GM12878 (cell line): ENCODE measurements at regions of chr5 and their contacts with region 1.

Region 1: DNA sequence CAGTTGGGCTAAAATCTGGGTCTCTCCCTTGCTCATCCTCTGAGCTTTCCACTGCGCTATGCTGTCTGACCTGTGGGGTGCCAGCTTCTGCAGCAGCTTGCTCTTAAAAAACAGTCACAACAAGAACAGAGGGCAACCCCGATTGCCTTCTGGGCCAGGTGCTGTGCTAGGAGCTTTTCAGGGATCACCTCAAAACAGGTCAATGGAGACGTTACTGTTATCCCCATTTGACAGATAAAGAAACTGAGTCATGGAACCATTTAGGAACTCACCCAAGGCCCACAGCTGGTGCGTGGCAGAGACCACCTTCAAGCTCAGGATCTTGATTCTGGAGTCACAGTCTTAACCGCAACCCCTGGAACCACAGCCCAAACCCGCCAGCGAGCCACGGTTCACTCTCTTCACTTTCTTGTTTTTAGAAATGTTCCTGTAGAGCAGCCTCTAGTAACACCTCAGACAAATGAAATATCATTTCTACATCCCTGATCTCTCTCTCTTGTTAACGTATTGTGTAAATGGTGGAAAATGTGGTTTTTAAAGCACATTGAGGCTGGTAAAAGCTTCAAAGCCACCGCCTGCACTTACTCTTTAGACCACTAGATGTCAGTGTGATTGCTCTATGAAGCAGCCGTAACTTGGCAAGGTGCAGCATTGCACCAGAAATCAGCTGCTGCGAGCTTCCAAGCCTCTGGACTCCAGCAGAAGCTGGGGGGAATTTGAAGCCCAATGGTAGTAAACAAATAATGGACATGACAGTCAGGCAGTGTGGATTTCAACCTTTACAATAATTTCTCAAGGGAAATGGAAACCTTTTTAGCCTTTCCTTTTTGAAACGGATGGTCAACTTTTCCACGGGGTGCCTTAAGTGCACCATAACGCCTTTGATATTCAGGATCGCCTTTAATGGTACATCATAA is 1.7 kb downstream of the FYB1 start:
- DNase-seq: peak; percentile 36
- ATAC-seq: peak; percentile 89
- H3K4me3 ChIP-seq: no peak overlapping the region
- H3K27ac ChIP-seq: no peak overlapping the region
- H3K4me1 ChIP-seq: no peaks in the 10 kb centered on the region
- H3K27me3 ChIP-seq: no peaks in the 10 kb centered on the region
- CTCF ChIP-seq: peak; percentile 92 to 96 (median 95)
- EP300 ChIP-seq: no peak
- POLR2A ChIP-seq: no peak
- RAD21 ChIP-seq: peak; percentile 84

Region 2: DNA sequence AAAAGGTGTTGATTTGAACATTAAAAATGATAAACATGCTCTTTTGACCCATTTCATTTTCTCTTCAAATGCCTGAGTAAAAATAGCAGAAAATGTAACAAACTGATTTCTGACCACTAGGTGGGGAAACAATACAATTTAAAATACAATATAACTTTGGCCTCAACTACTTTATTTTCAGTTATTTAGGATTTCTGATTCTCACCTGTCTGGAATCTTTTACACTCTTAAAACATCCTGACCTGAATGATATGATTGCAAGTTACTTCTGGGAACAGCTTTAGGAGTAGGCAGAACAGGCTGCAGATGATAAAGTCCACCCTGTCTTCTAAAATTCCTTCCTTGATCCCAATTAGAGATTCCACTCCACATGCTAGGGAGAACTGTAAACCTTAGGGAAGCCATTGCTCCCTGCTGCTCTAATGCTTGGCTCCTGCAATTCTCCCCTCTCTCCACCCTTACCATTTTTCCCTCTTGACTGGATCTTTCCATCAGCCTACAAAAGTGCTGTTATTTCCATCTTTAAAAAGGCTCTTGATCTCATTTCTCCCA is 68.6 kb before region 1 on chr5:
- CTCF ChIA-PET with region 1: interaction called, 10 read pairs
- POLR2A ChIA-PET with region 1: no interaction called
- RAD21 ChIA-PET with region 1: interaction called, 11 read pairs
- SMC1A ChIA-PET with region 1: interaction called, 8 read pairs
- in situ Hi-C with region 1: no loop called
- intact Hi-C with region 1: no loop called
- DNase-seq: no peak
- ATAC-seq: peak; percentile 49
- H3K4me3 ChIP-seq: no peak overlapping the region
- H3K27ac ChIP-seq: no peak overlapping the region
- H3K4me1 ChIP-seq: no peaks in the 10 kb centered on the region
- H3K27me3 ChIP-seq: no peaks in the 10 kb centered on the region
- CTCF ChIP-seq: peak in 2 of 3 experiments; percentile 22 to 26; a peak in 2 of 6 replicates
- EP300 ChIP-seq: no peak
- POLR2A ChIP-seq: no peak
- RAD21 ChIP-seq: 0 out of 2 replicates have a peak, but pooled peaks have one; percentile 12

Region 3: GRCh38 chr5:39256477-39257235 is 39.0 kb after region 1 on chr5:
- CTCF ChIA-PET with region 1: interaction called, 10 read pairs
- POLR2A ChIA-PET with region 1: no interaction called
- RAD21 ChIA-PET with region 1: interaction called, 9 read pairs
- SMC1A ChIA-PET with region 1: interaction called, 27 read pairs
- in situ Hi-C with region 1: no loop called
- intact Hi-C with region 1: no loop called
- DNase-seq: peak; percentile 56
- ATAC-seq: peak; percentile 93
- H3K4me3 ChIP-seq: no peak overlapping the region
- H3K27ac ChIP-seq: peak overlapping the region; percentile 48; the same call in 1 of the 2 replicates
- H3K4me1 ChIP-seq: no peaks in the 10 kb centered on the region
- H3K27me3 ChIP-seq: no peaks in the 10 kb centered on the region
- CTCF ChIP-seq: no peak
- EP300 ChIP-seq: no peak
- POLR2A ChIP-seq: no peak
- RAD21 ChIP-seq: no peak

Region 4: DNA sequence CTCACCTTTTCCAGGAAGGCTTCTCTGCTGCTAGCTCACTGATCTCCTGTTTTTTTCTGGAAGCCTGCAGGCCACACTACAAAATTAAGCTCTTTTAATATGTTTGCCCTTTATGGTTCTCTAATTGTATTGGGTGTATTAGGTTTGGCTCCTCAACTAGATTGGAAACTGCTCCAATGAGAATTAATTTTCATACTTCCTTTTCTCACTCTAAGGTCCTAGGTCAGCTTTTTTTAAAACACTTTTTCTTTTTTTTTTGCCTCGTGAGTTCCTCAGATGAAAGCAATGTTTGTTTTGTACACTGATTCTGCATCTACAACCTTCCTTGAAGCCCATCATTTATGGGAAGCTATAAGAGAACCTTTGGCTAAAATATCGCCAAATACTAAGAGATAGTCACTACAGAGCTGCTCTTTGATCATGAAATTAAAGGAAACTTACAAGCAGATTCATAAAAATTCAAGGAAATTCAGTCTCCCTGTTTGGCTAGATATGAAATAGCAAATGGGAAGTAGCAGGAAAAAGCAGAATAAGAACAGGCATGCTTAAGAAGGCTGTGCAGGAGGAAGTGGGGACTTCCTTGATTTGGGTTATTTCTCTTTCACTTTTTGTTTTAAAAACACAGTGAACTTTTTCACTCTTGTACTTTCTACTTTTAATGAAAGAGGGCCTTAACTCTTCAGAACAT is 56.9 kb after region 1 on chr5:
- CTCF ChIA-PET with region 1: interaction called, 294 read pairs
- POLR2A ChIA-PET with region 1: no interaction called
- RAD21 ChIA-PET with region 1: interaction called, 15 read pairs
- SMC1A ChIA-PET with region 1: interaction called, 192 read pairs
- in situ Hi-C with region 1: no loop called
- intact Hi-C with region 1: no loop called
- DNase-seq: peak; percentile 27
- ATAC-seq: peak; percentile 90
- H3K4me3 ChIP-seq: peak overlapping the region; percentile 49
- H3K27ac ChIP-seq: peak overlapping the region; percentile 76
- H3K4me1 ChIP-seq: 0 out of 2 replicates have a peak, but pooled peaks cover 3% of the 10 kb centered on the region
- H3K27me3 ChIP-seq: no peaks in the 10 kb centered on the region
- CTCF ChIP-seq: no peak
- EP300 ChIP-seq: no peak
- POLR2A ChIP-seq: no peak
- RAD21 ChIP-seq: no peak

Region 5: DNA sequence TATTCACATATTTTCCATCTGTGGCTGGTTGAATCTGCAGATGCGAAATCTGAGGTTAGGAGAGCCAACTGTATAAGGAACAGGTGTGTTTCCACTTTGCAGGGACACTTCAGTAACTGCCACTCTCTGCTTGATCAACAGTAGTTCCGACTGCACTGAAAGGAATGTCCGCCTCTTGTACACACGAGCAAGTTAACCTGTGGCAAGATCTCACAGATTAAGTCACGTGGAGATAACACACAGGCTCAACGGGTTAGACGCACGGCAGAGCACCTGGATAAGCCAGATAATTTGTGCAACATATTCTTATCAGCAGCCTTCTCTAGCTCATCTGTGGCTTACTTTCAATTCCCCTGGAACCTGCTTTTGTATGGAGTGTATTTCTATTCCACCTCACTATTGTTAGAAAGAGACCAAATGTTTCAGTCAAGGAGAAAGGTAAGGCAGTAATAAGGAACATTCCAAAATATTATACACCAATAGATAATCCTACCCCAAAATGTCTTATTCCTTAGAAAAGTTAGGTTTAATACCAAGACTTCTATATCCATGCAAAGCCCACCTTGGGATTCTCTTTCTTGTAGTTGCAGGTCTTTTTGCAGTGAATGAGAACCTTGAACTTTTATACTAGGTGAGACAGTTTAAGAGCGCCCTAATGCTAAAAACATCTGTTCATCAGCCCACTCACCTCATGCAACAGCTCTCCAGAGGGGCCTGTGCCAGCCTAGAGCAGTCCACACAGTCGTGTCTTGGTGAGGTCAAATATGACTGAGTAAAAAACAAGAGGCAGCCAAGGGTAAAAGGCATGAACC is 153.1 kb after region 1 on chr5:
- CTCF ChIA-PET with region 1: interaction called, 23 read pairs
- POLR2A ChIA-PET with region 1: no interaction called
- RAD21 ChIA-PET with region 1: interaction called, 7 read pairs
- SMC1A ChIA-PET with region 1: interaction called, 14 read pairs
- in situ Hi-C with region 1: no loop called
- intact Hi-C with region 1: loop called (anchors 10 kb)
- DNase-seq: no peak
- ATAC-seq: no peak
- H3K4me3 ChIP-seq: no peak overlapping the region
- H3K27ac ChIP-seq: no peak overlapping the region
- H3K4me1 ChIP-seq: no peaks in the 10 kb centered on the region
- H3K27me3 ChIP-seq: no peaks in the 10 kb centered on the region; a peak in 1 of 4 replicates
- CTCF ChIP-seq: no peak
- EP300 ChIP-seq: no peak
- POLR2A ChIP-seq: no peak
- RAD21 ChIP-seq: no peak

Region 6: GRCh38 chr5:39547553-39548154 is 330.0 kb after region 1 on chr5:
- CTCF ChIA-PET with region 1: interaction called, 12 read pairs
- POLR2A ChIA-PET with region 1: no interaction called
- RAD21 ChIA-PET with region 1: interaction called, 6 read pairs
- SMC1A ChIA-PET with region 1: interaction called, 8 read pairs
- in situ Hi-C with region 1: loop called (anchors 10 kb)
- intact Hi-C with region 1: no loop called
- DNase-seq: no peak
- ATAC-seq: peak; percentile 36; the same call in 1 of the 3 replicates
- H3K4me3 ChIP-seq: no peak overlapping the region
- H3K27ac ChIP-seq: no peak overlapping the region
- H3K4me1 ChIP-seq: no peaks in the 10 kb centered on the region
- H3K27me3 ChIP-seq: peaks cover 0 to 4% of the 10 kb centered on the region in 2 experiments; a peak in 3 of 4 replicates
- CTCF ChIP-seq: peak; percentile 50 to 62 (median 59)
- EP300 ChIP-seq: no peak
- POLR2A ChIP-seq: no peak
- RAD21 ChIP-seq: peak; percentile 44